HCT116 (cell line): ENCODE measurements at regions of chr11 and their contacts with region 1.

Region 1: DNA sequence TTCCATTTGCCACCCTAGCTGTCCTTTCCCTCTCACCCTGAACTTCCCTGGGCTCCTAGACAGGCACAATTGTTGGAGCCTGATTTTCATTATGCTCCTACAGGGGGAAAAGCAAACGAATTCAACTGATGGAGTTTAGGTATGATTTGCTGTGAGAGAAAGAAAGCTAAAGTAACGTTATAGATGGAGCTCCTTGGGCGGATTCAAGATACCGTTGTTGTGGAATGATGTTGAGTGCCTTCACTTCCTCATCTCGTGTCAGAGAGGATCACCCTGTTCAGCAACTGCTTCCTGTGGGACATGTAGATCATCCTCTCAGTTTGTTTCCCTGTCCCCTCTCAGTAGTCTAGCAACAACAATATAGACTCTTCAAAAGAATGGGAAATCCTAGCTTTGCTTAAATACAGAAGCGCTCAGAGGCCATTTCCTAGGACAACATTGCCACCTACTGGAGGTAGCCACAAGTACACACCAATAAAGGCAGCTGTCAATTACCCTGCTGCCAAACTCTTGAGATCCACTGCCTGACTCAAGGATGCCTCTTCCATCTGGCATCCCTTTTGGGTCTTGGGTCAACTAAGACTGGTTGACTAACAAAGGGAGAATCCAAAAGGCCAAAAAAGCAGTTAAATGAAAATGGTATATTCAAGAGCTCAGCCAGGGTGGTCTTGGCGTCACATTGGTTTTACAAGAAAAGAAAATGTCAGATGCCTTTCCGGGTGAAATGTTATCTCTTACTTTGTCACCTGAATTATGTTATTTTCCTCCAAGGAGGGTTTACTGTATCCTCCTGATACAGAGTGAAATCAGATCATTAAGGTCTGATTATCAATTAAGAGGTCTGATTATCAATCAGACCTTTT is 13.5 kb upstream of the DTX4 start:
- DNase-seq: peak; percentile 47
- ATAC-seq: peak; percentile 94
- H3K4me3 ChIP-seq: no peak overlapping the region
- H3K27ac ChIP-seq: no peak overlapping the region
- H3K4me1 ChIP-seq: no peaks in the 10 kb centered on the region
- H3K27me3 ChIP-seq: no peaks in the 10 kb centered on the region
- CTCF ChIP-seq: peak; percentile 58 to 79 (median 77); a peak in 5 of 6 replicates
- POLR2A ChIP-seq: no peak
- RAD21 ChIP-seq: peak; percentile 88

Region 2: DNA sequence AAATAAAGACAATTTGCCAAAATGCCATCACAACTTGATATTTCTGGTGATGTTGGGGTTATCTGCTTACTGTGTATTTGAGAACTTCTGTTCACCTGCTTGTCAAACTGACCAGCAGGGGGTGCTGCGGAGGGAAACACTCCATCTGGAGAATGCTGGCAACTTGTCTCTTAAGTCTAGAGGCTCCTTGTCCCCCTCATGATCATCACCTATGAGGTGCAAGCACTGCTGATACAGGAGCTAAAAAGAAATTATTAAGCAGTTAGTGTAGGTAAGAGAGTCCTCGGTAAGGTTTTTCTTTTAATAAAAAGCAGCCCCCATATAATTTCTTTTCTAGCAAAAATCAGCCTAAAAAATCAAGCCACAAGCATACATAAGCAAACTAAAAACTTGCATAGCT is 105.0 kb before region 1 on chr11:
- CTCF ChIA-PET with region 1: interaction called, 11 read pairs
- POLR2A ChIA-PET with region 1: no interaction called
- RAD21 ChIA-PET with region 1: no interaction called
- intact Hi-C with region 1: loop called (anchors 1 kb)
- DNase-seq: peak; percentile 40
- ATAC-seq: peak; percentile 74
- H3K4me3 ChIP-seq: no peak overlapping the region
- H3K27ac ChIP-seq: no peak overlapping the region
- H3K4me1 ChIP-seq: peaks cover 0 to 5% of the 10 kb centered on the region in 2 experiments; a peak in 2 of 4 replicates
- H3K27me3 ChIP-seq: 0 out of 2 replicates have a peak, but pooled peaks cover 4% of the 10 kb centered on the region
- CTCF ChIP-seq: peak; percentile 24 to 76 (median 75); a peak in 5 of 6 replicates
- POLR2A ChIP-seq: no peak
- RAD21 ChIP-seq: peak; percentile 22; the same call in 1 of the 2 replicates

Region 3: DNA sequence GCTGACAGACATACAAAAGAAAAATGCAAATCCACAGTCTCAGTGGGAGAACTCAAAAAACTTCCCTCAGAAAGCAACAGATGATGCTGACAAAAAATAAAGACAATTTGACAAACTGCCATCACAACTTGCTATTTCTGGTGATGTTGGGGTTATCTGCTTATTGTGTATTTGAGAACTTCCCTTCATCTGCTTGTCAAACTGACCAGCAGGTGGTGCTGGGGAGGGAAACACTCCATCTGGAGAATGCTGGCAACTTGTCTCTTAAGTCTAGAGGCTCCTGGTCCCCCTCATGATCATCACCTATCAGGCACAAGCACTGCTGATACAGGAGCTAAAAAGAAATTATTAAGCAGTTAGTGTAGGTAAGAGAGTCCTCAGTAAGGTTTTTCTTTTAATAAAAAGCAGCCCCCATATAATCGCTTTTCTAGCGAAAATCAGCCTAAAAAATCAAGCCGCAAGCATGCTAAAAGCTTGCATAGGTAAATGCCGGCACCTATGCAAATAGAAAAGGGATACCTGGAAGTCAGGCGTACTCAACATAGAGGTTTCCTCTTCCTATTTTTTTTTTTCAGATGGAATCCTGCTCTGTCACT is 61.2 kb before region 1 on chr11:
- CTCF ChIA-PET with region 1: interaction called, 7 read pairs
- POLR2A ChIA-PET with region 1: no interaction called
- RAD21 ChIA-PET with region 1: no interaction called
- intact Hi-C with region 1: loop called (anchors 2 kb)
- DNase-seq: peak; percentile 48
- ATAC-seq: peak; percentile 84
- H3K4me3 ChIP-seq: no peak overlapping the region
- H3K27ac ChIP-seq: no peak overlapping the region
- H3K4me1 ChIP-seq: no peaks in the 10 kb centered on the region
- H3K27me3 ChIP-seq: no peaks in the 10 kb centered on the region
- CTCF ChIP-seq: peak; percentile 37 to 74 (median 65); a peak in 5 of 6 replicates
- POLR2A ChIP-seq: no peak
- RAD21 ChIP-seq: peak; percentile 44

Region 4: GRCh38 chr11:59135648-59136461 is 22.6 kb before region 1 on chr11:
- CTCF ChIA-PET with region 1: interaction called, 11 read pairs
- POLR2A ChIA-PET with region 1: no interaction called
- RAD21 ChIA-PET with region 1: no interaction called
- intact Hi-C with region 1: no loop called
- DNase-seq: peak; percentile 49
- ATAC-seq: peak; percentile 100
- H3K4me3 ChIP-seq: 0 out of 4 replicates have a peak overlapping the region, but pooled peaks of 1 of the 2 experiments have one; percentile 17
- H3K27ac ChIP-seq: no peak overlapping the region
- H3K4me1 ChIP-seq: peaks cover 0 to 6% of the 10 kb centered on the region in 2 experiments; a peak in 2 of 4 replicates
- H3K27me3 ChIP-seq: no peaks in the 10 kb centered on the region
- CTCF ChIP-seq: peak; percentile 72 to 99 (median 99); a peak in 5 of 6 replicates
- POLR2A ChIP-seq: no peak
- RAD21 ChIP-seq: peak; percentile 90

Region 5: DNA sequence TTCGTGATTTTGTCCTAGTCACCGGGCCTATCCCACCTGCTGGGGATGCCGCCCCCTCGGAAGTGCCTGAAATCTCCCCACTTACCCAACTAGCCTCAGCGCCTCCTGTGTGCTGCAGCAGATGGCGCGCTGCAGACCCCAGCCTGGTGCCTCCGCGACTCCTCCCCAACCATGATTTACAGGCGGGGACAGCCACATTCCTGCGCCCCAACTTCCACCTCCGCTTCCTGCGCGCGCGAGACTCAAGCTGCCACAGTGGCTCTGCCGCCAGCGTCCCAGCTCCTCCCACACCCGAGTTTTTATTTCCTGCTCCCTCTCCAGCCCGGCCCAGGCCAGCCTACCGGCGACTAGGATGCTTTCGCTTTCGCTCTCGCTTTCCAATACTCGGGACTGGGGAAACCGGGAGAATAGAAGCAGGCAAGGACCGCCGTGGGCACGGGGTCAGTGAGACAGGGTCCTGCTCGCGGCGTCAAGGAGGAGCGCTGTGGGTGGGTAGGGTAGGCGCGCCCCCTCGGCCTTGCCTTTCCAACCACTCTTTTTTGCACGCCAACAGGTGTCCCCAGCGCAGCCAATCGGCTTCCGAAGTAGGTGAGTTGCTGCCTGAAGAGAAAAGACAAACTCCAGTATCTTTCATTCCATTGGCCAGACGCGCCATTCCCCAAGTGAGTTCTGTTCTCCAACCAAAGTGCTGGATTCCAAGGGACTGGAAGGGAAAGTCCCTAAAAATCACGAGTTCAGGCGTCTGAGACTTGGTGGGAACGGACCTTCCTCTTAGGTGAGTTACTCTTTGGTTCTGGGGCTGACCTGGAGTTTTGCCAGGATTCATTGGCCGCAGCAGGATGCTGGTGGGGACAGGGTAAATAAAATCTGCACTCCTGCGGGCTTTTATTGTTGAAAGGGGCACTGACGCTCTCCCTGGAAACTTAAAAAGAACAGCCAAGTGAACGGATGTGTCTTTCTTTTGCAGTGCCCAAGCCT is 15.6 kb before region 1 on chr11 and contains the start of gene FAM111A:
- CTCF ChIA-PET with region 1: interaction called, 59 read pairs
- POLR2A ChIA-PET with region 1: interaction called, 6 read pairs
- RAD21 ChIA-PET with region 1: interaction called, 3 to 5 read pairs
- intact Hi-C with region 1: no loop called
- DNase-seq: peak; percentile 83
- ATAC-seq: peak; percentile 85
- H3K4me3 ChIP-seq: peak within 1 kb of the TSS; percentile 51 to 79
- H3K27ac ChIP-seq: peak within 1 kb of the TSS; percentile 67
- H3K4me1 ChIP-seq: peaks cover 15 to 34% of the 10 kb centered on the region in 2 experiments
- H3K27me3 ChIP-seq: no peaks in the 10 kb centered on the region
- CTCF ChIP-seq: peak in 2 of 3 experiments; percentile 9 to 21; a peak in 1 of 6 replicates
- POLR2A ChIP-seq: no peak
- RAD21 ChIP-seq: no peak
- total RNA-seq, gene FAM111A: 30.3 TPM

Region 6: GRCh38 chr11:59171508-59172322 is 13.3 kb after region 1 on chr11 and contains the start of gene DTX4:
- CTCF ChIA-PET with region 1: interaction called, 44 read pairs
- POLR2A ChIA-PET with region 1: no interaction called
- RAD21 ChIA-PET with region 1: no interaction called
- intact Hi-C with region 1: no loop called
- DNase-seq: peak; percentile 84
- ATAC-seq: peak; percentile 89
- H3K4me3 ChIP-seq: peak within 1 kb of the TSS; percentile 44 to 59
- H3K27ac ChIP-seq: no peak within 1 kb of the TSS; the same call in 1 of the 2 replicates
- H3K4me1 ChIP-seq: peaks cover 14 to 39% of the 10 kb centered on the region in 2 experiments; a peak in 3 of 4 replicates
- H3K27me3 ChIP-seq: no peaks in the 10 kb centered on the region
- CTCF ChIP-seq: peak; percentile 78 to 94 (median 83)
- POLR2A ChIP-seq: no peak
- RAD21 ChIP-seq: peak; percentile 94
- total RNA-seq, gene DTX4: 7.6 TPM

Region 7: DNA sequence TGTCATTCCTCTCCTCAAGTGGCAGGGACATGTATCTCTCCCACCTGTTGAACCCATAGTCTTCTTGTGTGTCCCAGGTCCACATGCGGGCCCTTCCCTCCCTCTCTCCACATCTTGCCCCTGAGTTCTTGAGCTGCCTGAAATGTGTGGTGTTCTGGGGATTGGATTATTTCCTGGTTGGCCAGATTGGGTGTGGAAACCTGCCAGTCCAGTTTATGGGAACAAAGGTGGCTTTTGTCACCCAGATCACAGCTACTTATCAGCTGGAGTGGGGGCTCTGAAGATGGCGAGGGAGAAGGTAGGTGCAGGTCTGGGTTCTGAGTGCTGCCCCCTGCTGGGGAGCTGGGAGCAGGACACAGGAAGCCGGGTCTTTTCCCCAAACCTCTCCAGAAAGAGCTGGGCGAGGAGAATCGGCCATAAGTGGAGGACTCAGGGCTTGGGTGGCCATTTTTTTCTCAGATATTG is 27.7 kb after region 1 on chr11:
- CTCF ChIA-PET with region 1: interaction called, 13 read pairs
- POLR2A ChIA-PET with region 1: no interaction called
- RAD21 ChIA-PET with region 1: no interaction called
- intact Hi-C with region 1: no loop called
- DNase-seq: peak; percentile 57
- ATAC-seq: peak; percentile 92
- H3K4me3 ChIP-seq: peak overlapping the region in 1 of 2 experiments; percentile 7; a peak in 1 of 4 replicates
- H3K27ac ChIP-seq: no peak overlapping the region; the same call in 1 of the 2 replicates
- H3K4me1 ChIP-seq: peaks cover 13 to 20% of the 10 kb centered on the region in 2 experiments; a peak in 3 of 4 replicates
- H3K27me3 ChIP-seq: no peaks in the 10 kb centered on the region
- CTCF ChIP-seq: peak; percentile 61 to 90 (median 85)
- POLR2A ChIP-seq: no peak
- RAD21 ChIP-seq: peak; percentile 42; the same call in 1 of the 2 replicates